ENCODE measurements at regions of chr12 and their contacts with region 1.

Region 1: GRCh38 chr12:33628093-33628492 is 188.5 kb upstream of the SYT10 start:
- DNase-seq: no peak
- ATAC-seq: no peak
- H3K4me3 ChIP-seq: no peak overlapping the region
- H3K4me3 Mint-ChIP-seq: no peak overlapping the region
- H3K27ac ChIP-seq: no peak overlapping the region
- H3K27ac Mint-ChIP-seq: no peak overlapping the region
- H3K4me1 ChIP-seq: no peaks in the 10 kb centered on the region
- H3K4me1 Mint-ChIP-seq: no peaks in the 10 kb centered on the region
- H3K27me3 ChIP-seq: no peaks in the 10 kb centered on the region
- H3K27me3 Mint-ChIP-seq: no peaks in the 10 kb centered on the region
- CTCF ChIP-seq: no peak

Region 2: DNA sequence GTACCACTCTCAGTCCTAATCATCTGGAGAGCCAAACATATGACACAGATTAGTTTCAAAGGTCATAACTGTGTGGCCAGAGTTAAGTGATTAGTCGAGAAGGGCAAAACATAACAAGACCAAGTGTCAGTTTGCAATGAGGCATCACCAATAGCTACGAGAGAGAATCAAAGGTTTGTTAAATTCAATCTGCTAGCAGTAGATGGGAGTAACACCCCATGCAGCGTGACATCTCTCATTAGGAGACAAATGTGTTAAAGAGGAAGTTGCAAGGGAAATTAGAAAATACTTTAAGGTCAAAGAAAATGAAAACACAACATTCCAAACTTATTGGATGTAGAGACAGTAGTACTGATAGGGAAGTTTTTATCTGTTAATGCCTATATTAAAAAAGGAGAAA is 52.7 kb before region 1 on chr12:
- CTCF ChIA-PET with region 1: no interaction called
- POLR2A ChIA-PET with region 1: no interaction called
- intact Hi-C with region 1: loop called in 1 of 2 experiments (anchors 5 kb)
- DNase-seq: no peak
- ATAC-seq: no peak
- H3K4me3 ChIP-seq: no peak overlapping the region
- H3K4me3 Mint-ChIP-seq: no peak overlapping the region
- H3K27ac ChIP-seq: no peak overlapping the region
- H3K27ac Mint-ChIP-seq: no peak overlapping the region
- H3K4me1 ChIP-seq: no peaks in the 10 kb centered on the region
- H3K4me1 Mint-ChIP-seq: no peaks in the 10 kb centered on the region
- H3K27me3 ChIP-seq: no peaks in the 10 kb centered on the region
- H3K27me3 Mint-ChIP-seq: no peaks in the 10 kb centered on the region
- CTCF ChIP-seq: no peak